GM10248 (cell line): ENCODE measurements at regions of chr21 and their contacts with region 1.

Region 1: GRCh38 chr21:44304877-44305293 is 5.0 kb downstream of the PFKL start:
- DNase-seq: peak; percentile 61
- CTCF ChIP-seq: peak; percentile 25

Region 2: DNA sequence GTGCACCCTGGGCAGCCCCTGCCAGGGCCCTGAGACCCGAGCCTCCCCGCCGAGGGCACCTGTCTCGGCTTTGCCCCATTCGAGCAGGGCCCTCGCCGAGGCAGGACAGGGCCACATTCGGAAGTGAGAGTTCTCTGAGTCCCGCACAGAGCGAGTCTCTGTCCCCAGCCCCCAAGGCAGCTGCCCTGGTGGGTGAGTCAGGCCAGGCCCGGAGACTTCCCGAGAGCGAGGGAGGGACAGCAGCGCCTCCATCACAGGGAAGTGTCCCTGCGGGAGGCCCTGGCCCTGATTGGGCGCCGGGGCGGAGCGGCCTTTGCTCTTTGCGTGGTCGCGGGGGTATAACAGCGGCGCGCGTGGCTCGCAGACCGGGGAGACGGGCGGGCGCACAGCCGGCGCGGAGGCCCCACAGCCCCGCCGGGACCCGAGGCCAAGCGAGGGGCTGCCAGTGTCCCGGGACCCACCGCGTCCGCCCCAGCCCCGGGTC is 19.3 kb before region 1 on chr21 and contains the start of gene AIRE:
- CTCF ChIA-PET with region 1: no interaction called
- POLR2A ChIA-PET with region 1: no interaction called
- DNase-seq: no peak
- CTCF ChIP-seq: no peak

Region 3: DNA sequence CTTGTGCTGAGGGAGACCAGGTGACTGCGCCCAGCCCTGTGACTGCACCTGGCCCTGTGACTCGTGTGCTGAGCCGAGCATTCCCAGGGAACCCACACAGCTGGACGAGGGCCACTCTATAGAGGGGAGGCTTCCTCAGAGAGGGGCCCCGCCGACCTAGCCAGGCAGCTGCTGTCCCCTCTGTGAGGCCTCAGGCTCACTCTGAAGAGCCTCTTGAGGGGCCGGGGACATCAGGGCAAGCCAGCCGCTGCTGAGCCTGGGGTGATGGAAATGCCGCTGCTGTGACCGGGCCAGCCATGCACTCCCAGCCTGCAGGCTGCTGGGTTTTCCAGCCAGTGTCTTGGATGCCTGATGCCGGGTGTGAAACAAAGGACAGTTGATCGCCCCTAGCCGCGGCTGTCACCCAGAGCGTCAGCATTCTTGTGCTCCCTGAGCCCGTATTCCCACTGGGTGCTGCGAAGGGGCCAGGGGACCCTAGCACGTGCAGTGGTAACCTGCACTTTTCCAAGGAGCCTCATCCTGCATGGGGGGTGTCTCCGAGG is 12.4 kb after region 1 on chr21:
- CTCF ChIA-PET with region 1: interaction called, 16 read pairs
- POLR2A ChIA-PET with region 1: no interaction called
- DNase-seq: no peak
- CTCF ChIP-seq: no peak

Region 4: GRCh38 chr21:44438531-44439207 is 133.8 kb after region 1 on chr21:
- CTCF ChIA-PET with region 1: no interaction called
- POLR2A ChIA-PET with region 1: no interaction called
- DNase-seq: no peak
- CTCF ChIP-seq: no peak